GM13976 (cell line): ENCODE measurements at regions of chr10 and their contacts with region 1.

Region 1: GRCh38 chr10:122298598-122299301 is 27.7 kb downstream of the BTBD16 start:
- DNase-seq: peak; percentile 83
- CTCF ChIP-seq: peak; percentile 78

Region 2: GRCh38 chr10:122435212-122435827 is 136.6 kb after region 1 on chr10:
- in situ Hi-C with region 1: loop called (anchors 5 kb)
- DNase-seq: no peak
- CTCF ChIP-seq: peak; percentile 22

Region 3: GRCh38 chr10:122565728-122566206 is 267.0 kb after region 1 on chr10:
- in situ Hi-C with region 1: loop called (anchors 25 kb)
- DNase-seq: peak; percentile 63
- CTCF ChIP-seq: peak; percentile 80

Region 4: GRCh38 chr10:122949296-122949695 is 650.5 kb after region 1 on chr10:
- in situ Hi-C with region 1: no loop called
- DNase-seq: no peak
- CTCF ChIP-seq: no peak